Activated B cell treated with CpG ODN at 0.5 μM for 24 hours (primary cell): ENCODE measurements at regions of chr19 and their contacts with region 1.

Region 1: GRCh38 chr19:18588611-18589379 is at the start of gene REX1BD:
- DNase-seq: peak; percentile 79
- ATAC-seq: peak; percentile 79
- H3K4me3 Mint-ChIP-seq: peak within 1 kb of the TSS; percentile 87
- H3K27ac Mint-ChIP-seq: peak within 1 kb of the TSS; percentile 83
- H3K4me1 Mint-ChIP-seq: peaks cover 41% of the 10 kb centered on the region
- H3K27me3 Mint-ChIP-seq: peaks cover 2% of the 10 kb centered on the region
- CTCF ChIP-seq: peak; percentile 61
- total RNA-seq, gene REX1BD: 83.7 and 85.9 TPM in 2 replicates

Region 2: DNA sequence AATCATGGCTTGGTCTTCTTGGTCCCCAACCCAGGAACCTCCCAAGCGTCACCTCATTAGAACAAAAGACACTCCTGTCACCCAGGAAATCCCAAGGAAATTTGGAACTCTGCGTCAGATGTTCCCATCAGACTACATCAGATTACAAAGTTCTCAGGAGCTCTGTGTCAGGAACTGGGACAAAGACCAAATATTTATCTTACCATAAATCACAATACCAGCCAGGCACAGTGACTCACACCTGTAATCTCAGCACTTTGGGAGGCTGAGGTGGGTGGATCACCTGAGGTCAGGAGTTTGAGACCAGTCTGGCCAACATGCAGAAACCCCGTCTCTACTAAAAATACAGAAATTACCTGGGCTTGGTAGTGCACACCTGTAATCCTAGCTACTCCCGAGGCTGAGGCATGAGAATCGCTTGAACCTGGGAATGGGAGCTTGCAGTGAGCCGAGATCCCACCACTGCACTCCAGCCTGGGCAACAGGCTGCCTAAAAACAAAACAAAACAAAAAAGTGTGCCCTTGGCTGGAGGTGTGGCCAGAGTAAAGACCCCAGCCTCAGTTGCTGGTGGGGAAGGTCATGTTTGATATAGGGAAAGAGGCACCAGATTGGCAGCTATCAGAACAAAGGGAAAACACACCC is 672.7 kb before region 1 on chr19:
- CTCF ChIA-PET with region 1: no interaction called
- POLR2A ChIA-PET with region 1: no interaction called
- intact Hi-C with region 1: no loop called
- DNase-seq: no peak
- ATAC-seq: no peak
- H3K4me3 Mint-ChIP-seq: no peak overlapping the region
- H3K27ac Mint-ChIP-seq: no peak overlapping the region
- H3K4me1 Mint-ChIP-seq: no peaks in the 10 kb centered on the region
- H3K27me3 Mint-ChIP-seq: peaks cover 3% of the 10 kb centered on the region
- CTCF ChIP-seq: no peak

Region 3: GRCh38 chr19:18469069-18469846 is 119.5 kb before region 1 on chr19:
- CTCF ChIA-PET with region 1: interaction called, 5 read pairs
- POLR2A ChIA-PET with region 1: no interaction called
- intact Hi-C with region 1: loop called (anchors 1 kb)
- DNase-seq: peak; percentile 44
- ATAC-seq: peak; percentile 48
- H3K4me3 Mint-ChIP-seq: no peak overlapping the region
- H3K27ac Mint-ChIP-seq: no peak overlapping the region
- H3K4me1 Mint-ChIP-seq: peaks cover 5% of the 10 kb centered on the region
- H3K27me3 Mint-ChIP-seq: no peaks in the 10 kb centered on the region
- CTCF ChIP-seq: no peak

Region 4: GRCh38 chr19:18557474-18558201 is 31.2 kb before region 1 on chr19 and contains the start of gene KXD1:
- CTCF ChIA-PET with region 1: no interaction called
- POLR2A ChIA-PET with region 1: interaction called, 35 read pairs
- intact Hi-C with region 1: loop called (anchors 1 kb)
- DNase-seq: peak; percentile 93
- ATAC-seq: peak; percentile 99
- H3K4me3 Mint-ChIP-seq: peak within 1 kb of the TSS; percentile 87
- H3K27ac Mint-ChIP-seq: peak within 1 kb of the TSS; percentile 89
- H3K4me1 Mint-ChIP-seq: peaks cover 25% of the 10 kb centered on the region
- H3K27me3 Mint-ChIP-seq: no peaks in the 10 kb centered on the region
- CTCF ChIP-seq: no peak
- total RNA-seq, gene KXD1: 82.2 and 88.8 TPM in 2 replicates

Region 5: GRCh38 chr19:18831524-18832305 is 242.9 kb after region 1 on chr19 and contains the start of gene UPF1:
- CTCF ChIA-PET with region 1: interaction called, 8 read pairs
- POLR2A ChIA-PET with region 1: interaction called, 13 read pairs
- intact Hi-C with region 1: loop called (anchors 2 kb)
- DNase-seq: peak; percentile 97
- ATAC-seq: peak; percentile 84
- H3K4me3 Mint-ChIP-seq: peak within 1 kb of the TSS; percentile 90
- H3K27ac Mint-ChIP-seq: peak within 1 kb of the TSS; percentile 77
- H3K4me1 Mint-ChIP-seq: peaks cover 35% of the 10 kb centered on the region
- H3K27me3 Mint-ChIP-seq: no peaks in the 10 kb centered on the region
- CTCF ChIP-seq: no peak
- total RNA-seq, gene UPF1: 93.2 and 107 TPM in 2 replicates

Region 6: DNA sequence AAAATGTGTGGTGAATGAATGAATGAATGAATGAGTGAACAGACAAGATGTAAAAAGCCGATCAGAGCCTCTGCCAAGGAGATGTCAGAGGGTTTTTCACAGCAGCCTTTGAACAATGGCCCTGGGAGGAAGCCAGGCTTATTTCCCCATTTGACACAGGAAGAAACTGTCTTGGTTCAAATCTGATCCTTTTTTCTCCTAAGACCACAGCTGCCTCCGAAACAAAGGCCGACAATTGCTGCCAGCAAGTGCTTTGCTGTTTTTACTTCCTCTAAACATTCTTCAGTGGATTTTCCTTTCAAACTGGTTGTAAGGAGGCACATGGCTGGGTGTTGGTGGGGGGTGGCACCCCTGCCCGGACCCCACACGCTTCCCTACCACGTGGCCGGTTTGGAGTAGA is 396.5 kb after region 1 on chr19:
- CTCF ChIA-PET with region 1: interaction called, 3 read pairs
- POLR2A ChIA-PET with region 1: no interaction called
- intact Hi-C with region 1: loop called (anchors 5 kb)
- DNase-seq: no peak
- ATAC-seq: no peak
- H3K4me3 Mint-ChIP-seq: no peak overlapping the region
- H3K27ac Mint-ChIP-seq: no peak overlapping the region
- H3K4me1 Mint-ChIP-seq: peaks cover 9% of the 10 kb centered on the region
- H3K27me3 Mint-ChIP-seq: peaks cover 4% of the 10 kb centered on the region
- CTCF ChIP-seq: no peak